ENCODE measurements at regions of chr6 and their contacts with region 1.

Region 1: GRCh38 chr6:104843200-104843599 is 16.5 kb downstream of the HACE1 start:
- DNase-seq: no peak
- ATAC-seq: no peak
- H3K4me3 ChIP-seq: no peak overlapping the region
- H3K27ac ChIP-seq: no peak overlapping the region
- H3K4me1 ChIP-seq: no peaks in the 10 kb centered on the region
- H3K27me3 ChIP-seq: no peaks in the 10 kb centered on the region
- CTCF ChIP-seq: no peak

Region 2: GRCh38 chr6:104625536-104625935 is 217.7 kb before region 1 on chr6:
- CTCF ChIA-PET with region 1: no interaction called
- POLR2A ChIA-PET with region 1: no interaction called
- in situ Hi-C with region 1: no loop called
- intact Hi-C with region 1: no loop called
- DNase-seq: no peak
- ATAC-seq: peak; percentile 65
- H3K4me3 ChIP-seq: no peak overlapping the region
- H3K27ac ChIP-seq: peak overlapping the region; percentile 77
- H3K4me1 ChIP-seq: peaks cover 35% of the 10 kb centered on the region
- H3K27me3 ChIP-seq: no peaks in the 10 kb centered on the region
- CTCF ChIP-seq: no peak

Region 3: DNA sequence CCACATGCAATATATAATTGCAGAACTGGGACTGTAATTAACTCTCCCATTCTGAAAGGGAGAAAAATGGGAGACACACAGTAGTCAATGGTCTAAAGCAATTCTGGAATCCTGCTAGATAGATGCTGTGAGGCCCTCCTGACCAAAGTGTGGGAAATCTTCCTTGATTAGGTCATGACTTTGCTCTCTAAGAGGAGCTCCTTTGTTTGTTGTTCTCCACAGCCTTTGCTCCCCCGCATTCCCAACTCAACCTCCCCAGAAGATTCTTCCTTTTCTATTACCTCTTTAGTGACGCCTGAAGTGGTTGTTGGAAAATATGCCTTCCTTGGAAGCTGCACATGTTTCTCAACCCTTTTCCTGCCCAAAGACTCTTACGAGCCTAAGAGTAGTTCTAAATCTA is 84.9 kb after region 1 on chr6:
- CTCF ChIA-PET with region 1: no interaction called
- POLR2A ChIA-PET with region 1: interaction called, 10 read pairs
- in situ Hi-C with region 1: no loop called
- intact Hi-C with region 1: no loop called
- DNase-seq: no peak
- ATAC-seq: no peak
- H3K4me3 ChIP-seq: no peak overlapping the region
- H3K27ac ChIP-seq: no peak overlapping the region
- H3K4me1 ChIP-seq: no peaks in the 10 kb centered on the region
- H3K27me3 ChIP-seq: no peaks in the 10 kb centered on the region; the same call in 1 of the 2 replicates
- CTCF ChIP-seq: no peak

Region 4: DNA sequence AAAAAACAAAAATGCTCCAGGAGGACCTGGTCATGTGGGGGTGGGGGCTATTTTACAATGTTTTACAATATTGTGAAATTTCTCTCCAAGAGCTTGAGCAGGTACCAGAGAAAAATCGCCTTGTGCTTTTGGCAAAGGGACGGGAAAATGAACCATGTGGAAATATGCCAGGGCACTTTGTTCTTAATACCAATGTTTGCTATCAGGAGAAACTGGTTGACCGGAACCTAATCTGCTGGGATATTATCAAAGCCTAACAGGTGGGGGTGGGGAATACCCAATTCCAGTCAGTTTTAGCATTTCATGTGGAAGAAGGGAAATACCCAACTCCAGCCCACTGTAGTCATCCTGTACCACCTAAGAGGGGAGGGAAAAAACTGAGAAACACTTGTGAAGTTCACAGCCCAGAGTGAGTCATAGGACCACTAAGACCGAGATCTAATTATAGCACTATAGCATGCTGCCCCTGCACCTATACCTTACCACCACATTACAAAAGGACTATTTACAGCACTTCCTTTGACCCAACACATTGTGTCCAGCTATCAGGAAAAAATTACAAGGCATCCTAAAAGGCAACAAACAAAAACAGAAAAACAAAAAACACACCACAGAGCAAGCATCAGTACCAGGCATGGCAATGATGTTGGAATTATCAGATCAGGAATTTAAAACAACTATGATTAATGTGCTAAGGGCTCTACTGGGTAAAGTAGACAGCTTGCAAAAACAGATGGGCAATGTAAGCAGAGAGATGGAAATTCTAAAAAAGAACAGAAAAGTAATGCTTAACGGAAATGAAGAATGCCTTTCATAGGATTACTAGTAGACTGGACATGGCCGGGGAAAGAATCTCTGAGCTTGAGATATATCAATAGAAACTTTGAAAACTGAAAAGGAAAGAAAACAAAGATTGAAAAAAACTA is 420.7 kb after region 1 on chr6:
- CTCF ChIA-PET with region 1: no interaction called
- POLR2A ChIA-PET with region 1: no interaction called
- in situ Hi-C with region 1: no loop called
- intact Hi-C with region 1: no loop called
- DNase-seq: no peak
- ATAC-seq: no peak
- H3K4me3 ChIP-seq: no peak overlapping the region
- H3K27ac ChIP-seq: no peak overlapping the region
- H3K4me1 ChIP-seq: no peaks in the 10 kb centered on the region
- H3K27me3 ChIP-seq: no peaks in the 10 kb centered on the region
- CTCF ChIP-seq: no peak

Measured in Panc1 (cell line).